A673 (cell line): ENCODE measurements at regions of chr6 and their contacts with region 1.

Region 1: GRCh38 chr6:123715006-123715875 is 78.5 kb upstream of the TRDN start:
- DNase-seq: peak; percentile 81
- H3K4me3 ChIP-seq: no peak overlapping the region
- H3K27ac ChIP-seq: peak overlapping the region; percentile 71
- H3K4me1 ChIP-seq: peaks cover 29% of the 10 kb centered on the region
- H3K27me3 ChIP-seq: no peaks in the 10 kb centered on the region
- CTCF ChIP-seq: peak; percentile 77

Region 2: GRCh38 chr6:122589115-122589514 is 1126.1 kb before region 1 on chr6:
- CTCF ChIA-PET with region 1: no interaction called
- POLR2A ChIA-PET with region 1: no interaction called
- intact Hi-C with region 1: no loop called
- DNase-seq: no peak
- H3K4me3 ChIP-seq: no peak overlapping the region
- H3K27ac ChIP-seq: no peak overlapping the region
- H3K4me1 ChIP-seq: no peaks in the 10 kb centered on the region
- H3K27me3 ChIP-seq: no peaks in the 10 kb centered on the region
- CTCF ChIP-seq: no peak

Region 3: GRCh38 chr6:122869437-122870024 is 845.7 kb before region 1 on chr6:
- CTCF ChIA-PET with region 1: interaction called, 23 read pairs
- POLR2A ChIA-PET with region 1: no interaction called
- intact Hi-C with region 1: loop called (anchors 1 kb)
- DNase-seq: peak; percentile 91
- H3K4me3 ChIP-seq: no peak overlapping the region
- H3K27ac ChIP-seq: peak overlapping the region; percentile 59
- H3K4me1 ChIP-seq: peaks cover 54% of the 10 kb centered on the region
- H3K27me3 ChIP-seq: no peaks in the 10 kb centered on the region
- CTCF ChIP-seq: peak; percentile 87

Region 4: DNA sequence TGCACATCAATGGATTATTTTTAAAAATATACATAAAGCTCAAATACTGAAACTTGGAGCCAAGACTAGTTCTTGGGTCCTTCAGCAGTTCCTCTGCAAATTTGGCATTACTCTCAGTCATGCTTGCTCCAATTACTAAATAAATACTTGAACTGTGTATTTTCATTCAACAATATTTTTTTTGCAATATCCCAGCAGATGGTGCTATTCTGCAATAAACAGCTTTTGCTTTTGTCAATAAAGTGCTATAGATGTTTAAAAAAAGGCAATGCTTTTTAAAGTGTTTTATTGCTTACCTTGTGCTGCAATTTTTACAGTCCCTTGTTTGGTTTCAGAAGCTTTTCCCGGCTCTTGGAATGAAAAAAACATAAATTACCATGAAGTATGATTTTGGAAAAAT is 321.9 kb before region 1 on chr6:
- CTCF ChIA-PET with region 1: interaction called, 5 read pairs
- POLR2A ChIA-PET with region 1: no interaction called
- intact Hi-C with region 1: loop called (anchors 1 kb)
- DNase-seq: peak; percentile 78
- H3K4me3 ChIP-seq: no peak overlapping the region
- H3K27ac ChIP-seq: peak overlapping the region; percentile 33
- H3K4me1 ChIP-seq: peaks cover 11% of the 10 kb centered on the region
- H3K27me3 ChIP-seq: no peaks in the 10 kb centered on the region
- CTCF ChIP-seq: peak; percentile 70

Region 5: GRCh38 chr6:123489589-123489988 is 225.7 kb before region 1 on chr6:
- CTCF ChIA-PET with region 1: interaction called, 6 read pairs
- POLR2A ChIA-PET with region 1: no interaction called
- intact Hi-C with region 1: loop called (anchors 1 kb)
- DNase-seq: no peak
- H3K4me3 ChIP-seq: no peak overlapping the region
- H3K27ac ChIP-seq: peak overlapping the region; percentile 89
- H3K4me1 ChIP-seq: peaks cover 53% of the 10 kb centered on the region
- H3K27me3 ChIP-seq: no peaks in the 10 kb centered on the region
- CTCF ChIP-seq: no peak

Region 6: DNA sequence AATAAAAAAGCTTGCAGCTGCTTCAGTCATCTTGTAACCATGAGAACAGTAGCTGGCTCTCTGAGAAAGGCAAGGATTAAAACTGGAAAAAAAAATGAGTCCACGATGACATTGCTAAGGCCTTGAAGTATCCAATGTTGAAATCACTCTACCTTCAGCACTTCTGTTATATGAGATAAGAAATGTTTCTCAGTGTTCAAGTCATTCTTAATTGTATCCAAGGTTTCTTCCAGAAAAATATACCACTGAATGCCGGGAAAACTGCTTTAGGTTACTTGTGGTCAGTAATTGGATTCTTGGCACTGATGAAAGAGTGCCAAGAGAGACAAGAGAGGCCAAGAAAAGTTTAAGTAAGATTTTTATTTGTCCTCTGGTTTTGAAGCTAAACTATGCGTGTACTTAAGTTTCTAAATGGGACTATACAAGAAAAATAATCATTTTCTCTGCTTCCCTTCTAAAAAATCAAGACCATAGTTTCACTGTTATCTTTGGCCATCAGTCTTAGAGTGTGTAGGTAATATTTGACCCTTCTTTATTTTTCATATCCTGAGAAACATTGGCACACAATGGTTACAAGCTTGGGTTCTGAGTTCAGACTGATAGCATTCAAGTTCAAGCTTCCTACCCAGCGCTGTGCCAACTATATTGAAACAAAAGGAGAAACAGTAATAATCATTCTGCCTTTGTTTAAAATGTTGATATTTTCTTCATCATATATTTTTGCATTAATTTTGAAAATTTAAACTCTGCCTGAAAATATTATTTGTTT is 163.1 kb before region 1 on chr6:
- CTCF ChIA-PET with region 1: no interaction called
- POLR2A ChIA-PET with region 1: no interaction called
- intact Hi-C with region 1: no loop called
- DNase-seq: no peak
- H3K4me3 ChIP-seq: no peak overlapping the region
- H3K27ac ChIP-seq: no peak overlapping the region
- H3K4me1 ChIP-seq: no peaks in the 10 kb centered on the region
- H3K27me3 ChIP-seq: no peaks in the 10 kb centered on the region
- CTCF ChIP-seq: no peak